CD8-positive, alpha-beta T cell (primary cell): ENCODE measurements at regions of chr7 and their contacts with region 1.

Region 1: GRCh38 chr7:74417419-74417971 is 36.2 kb upstream of the GTF2IRD1 start:
- DNase-seq: peak in 8 of 9 experiments; percentile 39 to 74 (median 60)
- ATAC-seq: peak; percentile 66
- H3K4me3 ChIP-seq: no peak overlapping the region
- H3K4me3 Mint-ChIP-seq: no peak overlapping the region
- H3K27ac ChIP-seq: no peak overlapping the region
- H3K27ac Mint-ChIP-seq: no peak overlapping the region
- H3K4me1 ChIP-seq: no peaks in the 10 kb centered on the region
- H3K4me1 Mint-ChIP-seq: no peaks in the 10 kb centered on the region
- H3K27me3 ChIP-seq: no peaks in the 10 kb centered on the region
- H3K27me3 Mint-ChIP-seq: no peaks in the 10 kb centered on the region
- CTCF ChIP-seq: peak; percentile 97

Region 2: GRCh38 chr7:73395538-73396503 is 1021.7 kb before region 1 on chr7:
- CTCF ChIA-PET with region 1: no interaction called
- POLR2A ChIA-PET with region 1: no interaction called
- intact Hi-C with region 1: no loop called
- DNase-seq: no peak
- ATAC-seq: no peak
- H3K4me3 ChIP-seq: no peak overlapping the region
- H3K4me3 Mint-ChIP-seq: no peak overlapping the region
- H3K27ac ChIP-seq: no peak overlapping the region
- H3K27ac Mint-ChIP-seq: no peak overlapping the region
- H3K4me1 ChIP-seq: no peaks in the 10 kb centered on the region
- H3K4me1 Mint-ChIP-seq: peaks cover 4% of the 10 kb centered on the region
- H3K27me3 ChIP-seq: peaks cover 0 to 2% of the 10 kb centered on the region in 2 experiments
- H3K27me3 Mint-ChIP-seq: peaks cover 3% of the 10 kb centered on the region
- CTCF ChIP-seq: no peak

Region 3: DNA sequence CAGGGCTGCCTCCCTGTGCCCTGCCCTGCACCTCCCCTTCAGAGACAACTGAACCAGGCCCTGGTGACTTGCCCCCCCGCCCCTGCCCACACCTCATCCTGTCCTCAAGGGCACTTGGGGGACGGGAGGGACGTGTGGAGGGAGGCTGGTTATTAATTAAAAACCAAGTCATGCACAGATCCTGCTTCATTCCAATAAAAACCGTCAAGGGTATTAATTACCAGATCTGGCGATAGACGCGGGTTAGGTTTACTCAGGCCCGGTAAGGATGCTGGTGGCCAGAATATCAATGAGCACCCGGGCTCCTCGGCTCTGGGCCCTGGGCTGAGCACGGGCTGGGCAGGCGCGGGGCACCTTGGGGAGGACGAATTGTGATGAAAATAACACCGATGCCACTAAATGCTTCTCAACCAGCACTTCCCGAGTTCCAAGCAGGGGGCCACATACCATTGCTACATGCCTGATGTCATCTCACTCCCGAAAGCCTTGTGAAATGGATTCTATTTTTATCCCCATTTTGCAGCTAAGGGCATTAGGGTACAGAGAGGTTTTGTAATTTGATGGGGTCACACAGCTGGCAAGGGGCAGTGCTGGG is 11.8 kb after region 1 on chr7:
- CTCF ChIA-PET with region 1: interaction called, 12 read pairs
- POLR2A ChIA-PET with region 1: no interaction called
- intact Hi-C with region 1: no loop called
- DNase-seq: no peak
- ATAC-seq: no peak
- H3K4me3 ChIP-seq: no peak overlapping the region
- H3K4me3 Mint-ChIP-seq: no peak overlapping the region
- H3K27ac ChIP-seq: no peak overlapping the region
- H3K27ac Mint-ChIP-seq: no peak overlapping the region
- H3K4me1 ChIP-seq: no peaks in the 10 kb centered on the region
- H3K4me1 Mint-ChIP-seq: no peaks in the 10 kb centered on the region
- H3K27me3 ChIP-seq: no peaks in the 10 kb centered on the region
- H3K27me3 Mint-ChIP-seq: no peaks in the 10 kb centered on the region
- CTCF ChIP-seq: no peak

Region 4: DNA sequence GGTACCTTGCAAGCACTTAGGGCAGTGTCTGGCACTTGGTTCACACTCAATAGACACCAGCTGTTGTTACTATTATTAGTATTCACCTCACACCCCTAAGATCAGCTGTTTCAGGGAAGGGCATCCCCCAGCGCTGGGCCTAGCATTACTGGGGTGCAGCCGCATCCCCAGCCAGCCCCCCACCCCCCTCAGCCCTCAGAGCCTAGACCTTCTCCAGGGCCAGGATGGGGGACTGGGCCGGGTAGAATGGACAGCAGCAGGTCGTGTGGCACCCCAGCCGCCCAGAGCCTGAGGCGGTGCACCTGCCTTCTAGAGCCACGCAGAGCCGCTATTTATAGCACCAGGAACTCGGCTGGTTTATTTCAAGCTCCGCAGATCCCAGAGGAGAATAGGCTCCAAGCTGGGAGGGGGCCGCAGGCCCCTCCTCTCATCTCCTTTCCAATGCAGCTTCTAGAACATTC is 96.7 kb after region 1 on chr7:
- CTCF ChIA-PET with region 1: no interaction called
- POLR2A ChIA-PET with region 1: no interaction called
- intact Hi-C with region 1: no loop called
- DNase-seq: no peak
- ATAC-seq: no peak
- H3K4me3 ChIP-seq: no peak overlapping the region
- H3K4me3 Mint-ChIP-seq: no peak overlapping the region
- H3K27ac ChIP-seq: no peak overlapping the region
- H3K27ac Mint-ChIP-seq: no peak overlapping the region
- H3K4me1 ChIP-seq: no peaks in the 10 kb centered on the region
- H3K4me1 Mint-ChIP-seq: no peaks in the 10 kb centered on the region
- H3K27me3 ChIP-seq: no peaks in the 10 kb centered on the region
- H3K27me3 Mint-ChIP-seq: no peaks in the 10 kb centered on the region
- CTCF ChIP-seq: no peak

Region 5: DNA sequence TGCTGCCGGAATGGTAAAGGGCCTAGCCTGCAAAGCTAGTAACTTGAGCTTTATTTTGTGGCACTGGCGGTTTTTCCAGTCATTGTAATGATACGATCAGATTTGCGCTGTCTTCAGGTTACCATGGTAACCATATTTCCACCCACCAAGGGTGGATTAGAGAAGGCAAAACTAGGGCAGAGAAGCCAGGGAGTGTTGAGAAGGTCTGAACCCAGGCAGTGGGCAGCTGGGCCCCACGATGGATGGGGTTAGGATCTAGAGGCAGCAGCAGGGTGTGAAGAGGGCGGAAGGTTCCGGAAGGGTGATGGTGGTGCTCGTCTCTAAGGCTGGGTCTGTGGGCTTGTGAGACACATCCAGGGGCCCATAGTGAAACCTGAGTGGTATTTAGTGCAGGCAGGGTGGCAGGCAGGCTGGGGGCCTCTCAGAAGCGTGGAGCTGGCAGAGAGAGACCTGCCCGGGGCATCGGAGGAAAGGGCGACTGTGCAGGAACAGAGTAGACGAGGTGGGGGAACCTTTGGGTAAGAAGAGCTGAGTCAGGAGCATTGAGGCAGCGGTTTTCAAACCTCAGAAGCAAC is 152.1 kb after region 1 on chr7:
- CTCF ChIA-PET with region 1: interaction called, 33 read pairs
- POLR2A ChIA-PET with region 1: no interaction called
- intact Hi-C with region 1: loop called in 1 of 2 experiments (anchors 2 kb)
- DNase-seq: no peak
- ATAC-seq: no peak
- H3K4me3 ChIP-seq: no peak overlapping the region
- H3K4me3 Mint-ChIP-seq: no peak overlapping the region
- H3K27ac ChIP-seq: no peak overlapping the region
- H3K27ac Mint-ChIP-seq: no peak overlapping the region
- H3K4me1 ChIP-seq: no peaks in the 10 kb centered on the region
- H3K4me1 Mint-ChIP-seq: no peaks in the 10 kb centered on the region
- H3K27me3 ChIP-seq: peaks cover 0 to 2% of the 10 kb centered on the region in 2 experiments
- H3K27me3 Mint-ChIP-seq: no peaks in the 10 kb centered on the region
- CTCF ChIP-seq: no peak

Region 6: DNA sequence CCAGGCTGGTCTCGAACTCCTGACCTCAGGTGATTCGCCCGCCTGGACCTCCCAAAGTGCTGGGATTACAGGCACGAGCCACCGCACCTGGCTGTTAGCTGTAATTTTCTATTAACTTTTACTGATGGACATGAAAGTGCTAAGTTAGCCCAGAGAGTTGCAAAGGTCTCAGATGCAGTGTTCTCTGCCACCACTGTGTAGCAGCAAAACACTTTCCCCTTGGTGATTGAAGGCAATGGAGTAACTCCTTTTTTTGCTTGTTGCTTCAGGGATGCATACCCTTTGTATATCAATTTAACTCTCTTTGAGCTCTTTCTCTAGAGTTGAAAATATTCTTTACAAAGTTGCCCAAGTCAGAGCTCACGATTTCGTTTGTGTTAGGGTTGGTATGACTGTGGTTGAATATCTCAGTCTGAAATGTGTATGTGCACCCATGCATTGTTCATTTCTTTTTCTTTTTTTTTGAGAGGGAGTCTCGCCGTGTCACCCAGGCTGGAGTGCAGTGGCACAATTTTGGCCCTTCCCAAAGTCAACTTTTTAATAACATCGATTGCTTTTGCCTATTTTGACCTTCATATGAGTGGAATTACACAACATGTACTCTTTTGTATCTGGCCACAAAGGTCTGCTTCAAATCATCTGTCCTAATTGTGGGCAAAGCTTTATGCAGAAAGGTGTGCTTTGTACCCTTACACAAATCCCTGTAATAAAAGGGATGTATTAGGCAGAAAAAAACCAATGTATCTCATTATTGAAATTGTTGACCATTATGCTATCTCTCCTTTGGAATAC is 292.6 kb after region 1 on chr7:
- CTCF ChIA-PET with region 1: no interaction called
- POLR2A ChIA-PET with region 1: no interaction called
- intact Hi-C with region 1: loop called in 1 of 2 experiments (anchors 10 kb)
- DNase-seq: peak in 1 of 9 experiments; percentile 14
- ATAC-seq: no peak
- H3K4me3 ChIP-seq: no peak overlapping the region
- H3K4me3 Mint-ChIP-seq: no peak overlapping the region
- H3K27ac ChIP-seq: no peak overlapping the region
- H3K27ac Mint-ChIP-seq: no peak overlapping the region
- H3K4me1 ChIP-seq: no peaks in the 10 kb centered on the region
- H3K4me1 Mint-ChIP-seq: no peaks in the 10 kb centered on the region
- H3K27me3 ChIP-seq: no peaks in the 10 kb centered on the region
- H3K27me3 Mint-ChIP-seq: no peaks in the 10 kb centered on the region
- CTCF ChIP-seq: no peak

Region 7: GRCh38 chr7:75045881-75046280 is 628.4 kb after region 1 on chr7:
- CTCF ChIA-PET with region 1: interaction called, 3 read pairs
- POLR2A ChIA-PET with region 1: no interaction called
- intact Hi-C with region 1: loop called in 1 of 2 experiments (anchors 2 kb)
- DNase-seq: no peak
- ATAC-seq: no peak
- H3K4me3 ChIP-seq: no peak overlapping the region
- H3K4me3 Mint-ChIP-seq: no peak overlapping the region
- H3K27ac ChIP-seq: no peak overlapping the region
- H3K27ac Mint-ChIP-seq: no peak overlapping the region
- H3K4me1 ChIP-seq: no peaks in the 10 kb centered on the region
- H3K4me1 Mint-ChIP-seq: no peaks in the 10 kb centered on the region
- H3K27me3 ChIP-seq: no peaks in the 10 kb centered on the region
- H3K27me3 Mint-ChIP-seq: no peaks in the 10 kb centered on the region
- CTCF ChIP-seq: no peak